Dorsolateral prefrontal cortex (tissue), 120 donors: ENCODE measurements at regions of chr19 and their contacts with region 1.

Region 1: GRCh38 chr19:50368649-50369570 is 3.5 kb upstream of the NAPSA start:
- DNase-seq: peak; percentile 78 to 94 (median 88)
- H3K4me3 ChIP-seq: peak overlapping the region; percentile 57 to 97 (median 77)
- H3K27ac ChIP-seq: peak overlapping the region in 58 of 59 donors; percentile 12 to 91 (median 82)
- H3K27me3 ChIP-seq: no peaks in the 10 kb centered on the region
- CTCF ChIP-seq: peak; percentile 66 to 97 (median 89)

Region 2: DNA sequence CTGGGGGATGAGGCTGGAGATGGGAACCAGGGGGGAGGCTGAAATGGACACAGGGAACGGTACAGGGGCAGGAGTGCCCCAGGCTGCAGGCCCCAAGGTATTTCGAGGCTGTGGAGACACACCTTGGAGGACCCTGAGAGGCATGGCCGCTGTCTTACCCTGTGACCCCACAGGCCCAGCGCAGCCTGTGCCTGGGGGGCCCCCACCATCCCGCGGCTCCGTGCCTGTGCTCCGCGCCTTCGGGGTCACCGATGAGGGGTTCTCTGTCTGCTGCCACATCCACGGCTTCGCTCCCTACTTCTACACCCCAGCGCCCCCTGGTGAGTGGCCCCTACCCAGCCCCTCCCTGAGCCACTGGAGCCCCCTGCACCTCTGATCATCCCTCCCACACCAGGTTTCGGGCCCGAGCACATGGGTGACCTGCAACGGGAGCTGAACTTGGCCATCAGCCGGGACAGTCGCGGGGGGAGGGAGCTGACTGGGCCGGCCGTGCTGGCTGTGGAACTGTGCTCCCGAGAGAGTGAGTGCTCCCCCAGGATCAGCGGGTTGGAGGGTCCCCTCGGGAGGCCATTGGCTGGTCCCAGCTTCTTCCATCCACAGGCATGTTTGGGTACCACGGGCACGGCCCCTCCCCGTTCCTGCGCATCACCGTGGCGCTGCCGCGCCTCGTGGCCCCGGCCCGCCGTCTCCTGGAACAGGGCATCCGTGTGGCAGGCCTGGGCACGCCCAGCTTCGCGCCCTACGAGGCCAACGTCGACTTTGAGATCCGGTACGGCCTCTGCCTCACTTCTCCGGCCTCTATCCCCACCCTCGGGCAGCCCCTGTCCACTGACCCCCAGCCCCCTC is 32.9 kb after region 1 on chr19:
- intact Hi-C with region 1: no loop called
- DNase-seq: no peak
- H3K4me3 ChIP-seq: no peak overlapping the region
- H3K27ac ChIP-seq: no peak overlapping the region
- H3K27me3 ChIP-seq: no peaks in the 10 kb centered on the region
- CTCF ChIP-seq: no peak

Region 3: GRCh38 chr19:50414864-50415660 is 46.2 kb after region 1 on chr19:
- intact Hi-C with region 1: loop called in 1 of 2 experiments (anchors 2 kb)
- DNase-seq: peak in 9 of 10 donors; percentile 45 to 80 (median 65)
- H3K4me3 ChIP-seq: no peak overlapping the region
- H3K27ac ChIP-seq: no peak overlapping the region
- H3K27me3 ChIP-seq: peaks cover 0 to 32% (median 24%) of the 10 kb centered on the region in 45 donors
- CTCF ChIP-seq: peak; percentile 22 to 90 (median 81)

Region 4: GRCh38 chr19:50461066-50461875 is 92.4 kb after region 1 on chr19:
- intact Hi-C with region 1: loop called (anchors 2 to 5 kb)
- DNase-seq: peak in 8 of 10 donors; percentile 23 to 72 (median 56)
- H3K4me3 ChIP-seq: no peak overlapping the region
- H3K27ac ChIP-seq: no peak overlapping the region
- H3K27me3 ChIP-seq: peaks cover 0 to 43% (median 12%) of the 10 kb centered on the region in 45 donors
- CTCF ChIP-seq: peak; percentile 59 to 91 (median 80)

Region 5: GRCh38 chr19:50556282-50557008 is 187.5 kb after region 1 on chr19:
- intact Hi-C with region 1: loop called (anchors 5 kb)
- DNase-seq: peak; percentile 85 to 91 (median 87)
- H3K4me3 ChIP-seq: peak overlapping the region; percentile 33 to 77 (median 60)
- H3K27ac ChIP-seq: peak overlapping the region in 55 of 59 donors; percentile 10 to 87 (median 75)
- H3K27me3 ChIP-seq: no peaks in the 10 kb centered on the region
- CTCF ChIP-seq: peak; percentile 70 to 98 (median 87)